CD8-positive, alpha-beta T cell (primary cell): ENCODE measurements at regions of chr5 and their contacts with region 1.

Region 1: GRCh38 chr5:96807075-96807654 is 580 bp downstream of the ERAP1 start:
- DNase-seq: peak in 2 of 9 experiments; percentile 9 to 32
- ATAC-seq: no peak
- H3K4me3 ChIP-seq: peak overlapping the region; percentile 71 to 85
- H3K4me3 Mint-ChIP-seq: peak overlapping the region; percentile 95
- H3K27ac ChIP-seq: peak overlapping the region; percentile 93 to 96
- H3K27ac Mint-ChIP-seq: peak overlapping the region; percentile 98
- H3K4me1 ChIP-seq: peaks cover 70% of the 10 kb centered on the region
- H3K4me1 Mint-ChIP-seq: peaks cover 82% of the 10 kb centered on the region
- H3K27me3 ChIP-seq: no peaks in the 10 kb centered on the region
- H3K27me3 Mint-ChIP-seq: no peaks in the 10 kb centered on the region
- CTCF ChIP-seq: no peak

Region 2: DNA sequence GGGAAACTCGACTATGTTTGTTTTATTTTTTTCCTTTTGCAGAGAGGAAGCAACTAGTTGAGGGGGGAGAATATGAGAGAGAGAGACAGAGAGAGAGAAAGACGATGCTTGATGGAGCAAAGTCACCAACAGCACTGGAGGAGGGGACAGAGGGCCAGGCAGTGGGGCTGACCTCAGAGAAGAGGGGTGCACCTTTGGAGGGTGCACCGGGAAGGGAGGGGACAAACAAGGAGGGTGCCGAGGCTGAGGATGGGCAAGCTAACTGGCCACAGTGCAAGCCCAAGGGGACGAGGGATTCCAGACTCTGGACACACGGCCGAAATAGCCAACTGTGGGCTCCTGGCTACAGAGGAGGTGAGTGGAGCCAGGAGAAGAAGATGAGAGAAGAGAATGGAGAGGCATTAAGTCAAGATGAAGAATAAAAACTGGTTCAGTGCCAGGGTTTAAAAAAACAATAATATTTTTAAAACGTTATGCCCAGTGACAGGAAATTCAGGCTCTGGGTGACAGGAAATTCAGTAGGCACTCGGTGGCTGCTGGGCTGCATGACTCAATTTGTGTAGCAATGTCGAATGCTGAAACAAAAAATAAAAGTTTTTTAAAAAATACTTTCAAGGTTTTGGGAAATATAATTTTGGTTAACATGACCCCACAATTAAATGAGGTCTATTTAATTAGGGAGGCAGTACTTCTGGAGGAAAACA is 971.3 kb before region 1 on chr5:
- CTCF ChIA-PET with region 1: no interaction called
- POLR2A ChIA-PET with region 1: no interaction called
- intact Hi-C with region 1: loop called in 1 of 2 experiments (anchors 10 kb)
- DNase-seq: peak in 5 of 9 experiments; percentile 43 to 68 (median 50)
- ATAC-seq: peak; percentile 26
- H3K4me3 ChIP-seq: peak overlapping the region; percentile 80 to 94
- H3K4me3 Mint-ChIP-seq: peak overlapping the region; percentile 82
- H3K27ac ChIP-seq: peak overlapping the region; percentile 39 to 82
- H3K27ac Mint-ChIP-seq: peak overlapping the region; percentile 88
- H3K4me1 ChIP-seq: peaks cover 30% of the 10 kb centered on the region
- H3K4me1 Mint-ChIP-seq: peaks cover 52% of the 10 kb centered on the region
- H3K27me3 ChIP-seq: no peaks in the 10 kb centered on the region
- H3K27me3 Mint-ChIP-seq: no peaks in the 10 kb centered on the region
- CTCF ChIP-seq: no peak

Region 3: DNA sequence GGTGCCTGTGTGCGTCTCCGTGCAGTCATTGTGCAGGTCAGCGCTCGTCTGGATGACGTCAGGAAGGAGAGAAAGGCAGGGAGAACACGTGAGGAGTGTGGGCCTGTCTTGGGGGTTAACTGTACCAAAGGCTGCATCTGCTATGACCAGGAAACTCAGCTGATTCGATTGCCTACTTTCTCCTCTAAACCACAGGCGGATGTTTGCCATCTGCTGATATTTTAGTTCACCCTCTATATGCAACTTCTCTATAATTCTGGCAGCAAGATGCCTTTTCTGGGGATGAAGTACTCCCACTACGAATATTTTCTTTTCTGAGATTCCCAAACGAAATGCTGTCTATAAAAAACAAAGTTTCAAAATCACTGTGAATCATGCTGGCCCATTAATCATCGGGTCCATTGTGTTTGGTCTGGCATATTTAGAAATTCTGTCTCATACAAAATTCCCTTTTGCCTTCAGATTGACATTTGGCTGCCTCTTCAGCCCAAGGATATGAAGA is 398.8 kb before region 1 on chr5:
- CTCF ChIA-PET with region 1: no interaction called
- POLR2A ChIA-PET with region 1: no interaction called
- intact Hi-C with region 1: no loop called
- DNase-seq: no peak
- ATAC-seq: no peak
- H3K4me3 ChIP-seq: no peak overlapping the region
- H3K4me3 Mint-ChIP-seq: no peak overlapping the region
- H3K27ac ChIP-seq: no peak overlapping the region
- H3K27ac Mint-ChIP-seq: no peak overlapping the region
- H3K4me1 ChIP-seq: no peaks in the 10 kb centered on the region
- H3K4me1 Mint-ChIP-seq: no peaks in the 10 kb centered on the region
- H3K27me3 ChIP-seq: no peaks in the 10 kb centered on the region
- H3K27me3 Mint-ChIP-seq: peaks cover 2% of the 10 kb centered on the region
- CTCF ChIP-seq: no peak

Region 4: GRCh38 chr5:96790961-96791504 is 16.1 kb before region 1 on chr5:
- CTCF ChIA-PET with region 1: interaction called, 4 read pairs
- POLR2A ChIA-PET with region 1: interaction called, 9 read pairs
- intact Hi-C with region 1: loop called in 1 of 2 experiments (anchors 2 kb)
- DNase-seq: no peak
- ATAC-seq: no peak
- H3K4me3 ChIP-seq: no peak overlapping the region
- H3K4me3 Mint-ChIP-seq: no peak overlapping the region
- H3K27ac ChIP-seq: no peak overlapping the region
- H3K27ac Mint-ChIP-seq: peak overlapping the region; percentile 41
- H3K4me1 ChIP-seq: peaks cover 22% of the 10 kb centered on the region
- H3K4me1 Mint-ChIP-seq: peaks cover 39% of the 10 kb centered on the region
- H3K27me3 ChIP-seq: no peaks in the 10 kb centered on the region
- H3K27me3 Mint-ChIP-seq: no peaks in the 10 kb centered on the region
- CTCF ChIP-seq: no peak

Region 5: DNA sequence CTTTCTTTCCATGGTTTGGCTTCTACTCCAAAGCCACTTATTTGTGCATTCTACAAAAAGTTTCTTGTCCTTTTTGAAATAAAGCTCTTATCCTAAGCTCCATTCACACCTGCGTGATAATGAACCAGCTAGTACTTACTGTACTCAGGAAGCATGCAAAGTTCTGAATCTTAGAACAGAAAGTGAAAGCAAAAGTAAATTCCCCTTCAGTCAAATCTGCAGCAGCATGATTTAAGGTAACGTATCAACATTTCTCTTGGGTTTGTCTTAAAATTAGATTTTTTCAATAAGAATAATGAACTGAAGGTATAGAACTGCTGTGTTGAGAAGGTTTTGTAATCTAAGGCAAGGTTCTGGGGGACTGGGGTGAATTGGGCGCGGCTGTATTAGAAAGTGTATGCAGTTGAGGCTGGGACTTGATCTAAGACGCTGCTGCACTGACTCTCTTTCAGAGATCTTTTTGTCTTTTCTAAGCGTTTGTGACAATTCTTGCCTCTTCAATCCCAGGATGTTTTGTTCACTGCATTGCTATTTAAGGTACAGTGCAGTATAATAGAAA is 69.2 kb after region 1 on chr5 and contains the start of gene ERAP2:
- CTCF ChIA-PET with region 1: interaction called, 5 read pairs
- POLR2A ChIA-PET with region 1: interaction called, 20 read pairs
- intact Hi-C with region 1: loop called (anchors 1 to 5 kb)
- DNase-seq: peak in 2 of 9 experiments; percentile 63 to 79
- ATAC-seq: peak; percentile 80
- H3K4me3 ChIP-seq: peak within 1 kb of the TSS; percentile 74 to 76
- H3K4me3 Mint-ChIP-seq: peak within 1 kb of the TSS; percentile 96
- H3K27ac ChIP-seq: peak within 1 kb of the TSS; percentile 75 to 78
- H3K27ac Mint-ChIP-seq: peak within 1 kb of the TSS; percentile 95
- H3K4me1 ChIP-seq: peaks cover 38% of the 10 kb centered on the region
- H3K4me1 Mint-ChIP-seq: peaks cover 71% of the 10 kb centered on the region
- H3K27me3 ChIP-seq: no peaks in the 10 kb centered on the region
- H3K27me3 Mint-ChIP-seq: no peaks in the 10 kb centered on the region
- CTCF ChIP-seq: no peak
- total RNA-seq, gene ERAP2: 46.5 to 49.9 TPM

Region 6: GRCh38 chr5:98773464-98774191 is 1966.5 kb after region 1 on chr5 and contains the start of gene RGMB:
- CTCF ChIA-PET with region 1: no interaction called
- POLR2A ChIA-PET with region 1: no interaction called
- intact Hi-C with region 1: loop called (anchors 5 to 10 kb)
- DNase-seq: peak; percentile 71 to 92 (median 89)
- ATAC-seq: peak; percentile 86
- H3K4me3 ChIP-seq: peak within 1 kb of the TSS; percentile 69 to 70
- H3K4me3 Mint-ChIP-seq: peak within 1 kb of the TSS; percentile 95
- H3K27ac ChIP-seq: peak within 1 kb of the TSS; percentile 37 to 53
- H3K27ac Mint-ChIP-seq: peak within 1 kb of the TSS; percentile 87
- H3K4me1 ChIP-seq: peaks cover 41% of the 10 kb centered on the region
- H3K4me1 Mint-ChIP-seq: peaks cover 56% of the 10 kb centered on the region
- H3K27me3 ChIP-seq: peaks cover 0 to 12% of the 10 kb centered on the region in 2 experiments
- H3K27me3 Mint-ChIP-seq: peaks cover 24% of the 10 kb centered on the region
- CTCF ChIP-seq: no peak
- total RNA-seq, gene RGMB: 5.8 to 6.6 TPM